ENCODE measurements at regions of chr20 and their contacts with region 1.

Region 1: GRCh38 chr20:36605399-36606157 is at the start of gene RAB5IF:
- DNase-seq: peak; percentile 99
- H3K4me3 ChIP-seq: peak within 1 kb of the TSS; percentile 44 to 97 (median 90)
- H3K27ac ChIP-seq: peak within 1 kb of the TSS; percentile 90 to 98 (median 93)
- H3K4me1 ChIP-seq: peaks cover 8 to 26% (median 20%) of the 10 kb centered on the region in 4 donors
- H3K27me3 ChIP-seq: no peaks in the 10 kb centered on the region
- CTCF ChIP-seq: peak; percentile 83 to 99 (median 89)
- EP300 ChIP-seq: no peak
- POLR2A ChIP-seq: peak; percentile 88
- total RNA-seq, gene RAB5IF: 42.2 to 136 (median 102) TPM

Region 2: DNA sequence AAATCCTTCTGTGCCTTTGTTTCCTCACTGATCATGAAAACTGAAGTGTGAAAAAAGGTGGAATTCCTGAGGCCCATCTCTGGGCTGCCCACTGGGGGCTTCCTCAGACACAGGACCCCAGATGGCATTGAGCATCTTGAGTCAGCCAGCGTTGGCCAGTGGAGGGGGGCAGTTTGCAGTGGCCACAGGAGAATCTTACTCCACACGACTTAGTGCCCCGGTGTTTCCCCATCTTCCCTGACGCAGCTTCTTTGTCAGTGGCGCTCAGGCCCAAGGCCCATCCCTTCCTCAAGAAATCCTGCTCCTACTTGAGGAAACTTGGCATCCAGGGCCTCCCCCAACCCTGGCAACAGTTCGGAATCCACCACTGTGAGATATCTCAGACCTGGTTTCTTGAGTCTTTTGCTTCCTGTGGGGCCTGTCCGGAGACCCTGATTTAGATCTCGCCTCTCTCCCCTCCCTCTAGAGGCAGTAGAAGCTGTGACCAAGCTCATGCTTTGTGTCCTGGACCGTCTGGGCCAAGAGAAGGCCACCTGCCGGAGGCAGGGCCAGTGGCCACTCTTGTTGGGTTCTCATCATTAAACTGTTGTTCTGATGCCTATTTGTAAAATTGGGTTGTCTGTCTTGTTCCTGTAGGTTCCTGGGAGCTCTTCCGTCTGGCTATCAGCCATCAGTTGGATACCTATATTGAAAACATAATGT is 319.7 kb before region 1 on chr20:
- in situ Hi-C with region 1: no loop called
- intact Hi-C with region 1: no loop called
- DNase-seq: no peak
- H3K4me3 ChIP-seq: no peak overlapping the region
- H3K27ac ChIP-seq: no peak overlapping the region
- H3K4me1 ChIP-seq: no peaks in the 10 kb centered on the region
- H3K27me3 ChIP-seq: peaks cover 15% of the 10 kb centered on the region
- CTCF ChIP-seq: no peak
- EP300 ChIP-seq: no peak
- POLR2A ChIP-seq: no peak

Region 3: DNA sequence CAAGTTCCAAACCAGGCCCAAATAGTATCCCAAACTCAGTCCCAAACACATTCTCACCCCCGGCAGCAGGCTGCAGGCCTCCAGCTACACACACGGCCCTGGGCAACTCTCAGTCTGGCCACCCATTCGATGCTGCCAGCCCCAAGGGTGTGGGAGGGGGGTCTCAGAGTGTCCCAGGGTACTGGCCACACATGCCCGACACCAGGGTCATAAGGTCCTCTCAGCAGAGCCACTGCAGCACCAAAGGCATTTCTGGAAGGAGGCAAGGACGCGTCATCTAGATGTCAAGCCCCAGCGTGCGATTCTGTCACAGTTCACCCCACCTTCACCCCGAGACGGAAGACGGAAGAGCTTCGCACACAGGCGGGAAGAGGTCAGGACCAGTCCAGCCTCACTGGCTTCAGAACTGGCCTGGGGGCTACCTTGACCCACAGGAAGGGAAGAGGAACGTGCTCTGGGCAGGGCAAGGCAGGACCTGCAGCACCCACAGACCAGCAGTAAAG is 54.7 kb before region 1 on chr20:
- in situ Hi-C with region 1: loop called in 2 of 4 experiments (anchors 10 kb)
- intact Hi-C with region 1: no loop called
- DNase-seq: no peak
- H3K4me3 ChIP-seq: no peak overlapping the region
- H3K27ac ChIP-seq: peak overlapping the region; percentile 31 to 99 (median 62)
- H3K4me1 ChIP-seq: peaks cover 0 to 5% (median 0%) of the 10 kb centered on the region in 4 donors
- H3K27me3 ChIP-seq: no peaks in the 10 kb centered on the region
- CTCF ChIP-seq: no peak
- EP300 ChIP-seq: no peak
- POLR2A ChIP-seq: peak; percentile 17

Region 4: GRCh38 chr20:36573103-36573794 is 32.3 kb before region 1 on chr20 and contains the start of gene TGIF2:
- in situ Hi-C with region 1: no loop called
- intact Hi-C with region 1: loop called (anchors 5 kb)
- DNase-seq: peak; percentile 87
- H3K4me3 ChIP-seq: peak within 1 kb of the TSS; percentile 59 to 81 (median 76)
- H3K27ac ChIP-seq: peak within 1 kb of the TSS; percentile 89 to 97 (median 92)
- H3K4me1 ChIP-seq: peaks cover 11 to 31% (median 26%) of the 10 kb centered on the region in 4 donors
- H3K27me3 ChIP-seq: no peaks in the 10 kb centered on the region
- CTCF ChIP-seq: no peak
- EP300 ChIP-seq: no peak
- POLR2A ChIP-seq: peak; percentile 35
- total RNA-seq, gene TGIF2: 0.75 to 130 (median 3.9) TPM

Region 5: DNA sequence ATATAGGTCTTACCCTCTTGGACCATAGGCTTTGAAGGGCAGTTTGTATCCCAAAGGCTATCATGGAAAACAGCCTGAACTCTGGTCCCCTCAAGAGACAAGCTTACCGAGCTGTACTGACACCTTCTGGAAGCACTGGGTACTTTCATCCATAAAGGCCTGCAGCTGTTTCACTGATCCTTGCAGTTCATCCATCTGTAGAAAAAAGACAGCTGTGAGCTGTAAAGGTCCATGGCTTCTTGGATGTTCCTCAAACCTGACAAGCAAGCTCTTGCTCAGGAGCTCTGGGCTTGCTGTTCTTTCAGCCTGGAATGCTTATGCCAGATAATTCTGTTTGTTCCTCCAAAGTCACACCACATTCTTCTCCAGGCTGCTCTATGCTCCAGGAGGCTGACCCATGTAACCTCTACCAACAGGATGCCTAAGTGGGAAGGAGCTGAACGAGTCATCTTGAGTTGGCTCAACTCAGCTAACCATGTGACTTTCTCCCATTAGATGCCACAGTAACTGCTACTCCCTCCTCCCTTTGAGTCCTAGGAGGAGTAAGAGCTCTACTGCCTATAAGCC is 149.2 kb after region 1 on chr20:
- in situ Hi-C with region 1: no loop called
- intact Hi-C with region 1: loop called (anchors 10 kb)
- DNase-seq: peak; percentile 54
- H3K4me3 ChIP-seq: no peak overlapping the region
- H3K27ac ChIP-seq: peak overlapping the region in 1 of 4 donors; percentile 40
- H3K4me1 ChIP-seq: peaks cover 0 to 6% (median 0%) of the 10 kb centered on the region in 4 donors
- H3K27me3 ChIP-seq: no peaks in the 10 kb centered on the region
- CTCF ChIP-seq: peak; percentile 69 to 76 (median 70)
- EP300 ChIP-seq: no peak
- POLR2A ChIP-seq: no peak

Region 6: GRCh38 chr20:36886859-36887751 is 281.5 kb after region 1 on chr20:
- in situ Hi-C with region 1: loop called in 1 of 4 experiments (anchors 25 kb)
- intact Hi-C with region 1: no loop called
- DNase-seq: peak; percentile 91
- H3K4me3 ChIP-seq: no peak overlapping the region
- H3K27ac ChIP-seq: no peak overlapping the region
- H3K4me1 ChIP-seq: peaks cover 4 to 9% (median 6%) of the 10 kb centered on the region in 4 donors
- H3K27me3 ChIP-seq: no peaks in the 10 kb centered on the region
- CTCF ChIP-seq: peak; percentile 94 to 97 (median 96)
- EP300 ChIP-seq: no peak
- POLR2A ChIP-seq: no peak

Region 7: DNA sequence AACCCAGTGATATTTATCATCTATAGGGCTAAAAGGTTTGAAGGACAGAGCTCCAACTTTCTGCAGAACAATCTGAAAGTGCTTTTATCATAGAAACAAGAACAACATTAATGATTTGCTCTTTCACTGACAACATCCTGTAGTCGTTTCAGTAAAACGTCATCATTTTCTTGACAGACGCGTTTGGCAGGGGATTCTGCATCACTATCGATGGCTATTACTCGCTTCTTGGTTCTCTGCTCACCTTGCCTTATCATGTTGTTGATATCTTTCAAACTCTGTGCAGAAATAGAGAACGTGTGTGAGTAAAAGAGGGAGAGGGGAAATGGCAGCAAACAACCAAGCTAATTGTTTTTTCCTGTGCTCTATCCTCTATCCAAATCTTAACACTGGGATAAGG is 393.1 kb after region 1 on chr20:
- in situ Hi-C with region 1: no loop called
- intact Hi-C with region 1: no loop called
- DNase-seq: no peak
- H3K4me3 ChIP-seq: no peak overlapping the region
- H3K27ac ChIP-seq: no peak overlapping the region
- H3K4me1 ChIP-seq: no peaks in the 10 kb centered on the region
- H3K27me3 ChIP-seq: no peaks in the 10 kb centered on the region
- CTCF ChIP-seq: no peak
- EP300 ChIP-seq: no peak
- POLR2A ChIP-seq: no peak